Activated naive CD4-positive, alpha-beta T cell treated with anti-CD3 and anti-CD28 coated beads for 36 hours (primary cell): ENCODE measurements at regions of chr6 and their contacts with region 1.

Region 1: GRCh38 chr6:99151634-99152344 is 197.7 kb downstream of the FAXC start:
- DNase-seq: peak; percentile 67
- H3K4me3 Mint-ChIP-seq: no peak overlapping the region
- H3K27ac Mint-ChIP-seq: no peak overlapping the region
- H3K4me1 Mint-ChIP-seq: no peaks in the 10 kb centered on the region
- H3K27me3 Mint-ChIP-seq: peaks cover 3% of the 10 kb centered on the region

Region 2: DNA sequence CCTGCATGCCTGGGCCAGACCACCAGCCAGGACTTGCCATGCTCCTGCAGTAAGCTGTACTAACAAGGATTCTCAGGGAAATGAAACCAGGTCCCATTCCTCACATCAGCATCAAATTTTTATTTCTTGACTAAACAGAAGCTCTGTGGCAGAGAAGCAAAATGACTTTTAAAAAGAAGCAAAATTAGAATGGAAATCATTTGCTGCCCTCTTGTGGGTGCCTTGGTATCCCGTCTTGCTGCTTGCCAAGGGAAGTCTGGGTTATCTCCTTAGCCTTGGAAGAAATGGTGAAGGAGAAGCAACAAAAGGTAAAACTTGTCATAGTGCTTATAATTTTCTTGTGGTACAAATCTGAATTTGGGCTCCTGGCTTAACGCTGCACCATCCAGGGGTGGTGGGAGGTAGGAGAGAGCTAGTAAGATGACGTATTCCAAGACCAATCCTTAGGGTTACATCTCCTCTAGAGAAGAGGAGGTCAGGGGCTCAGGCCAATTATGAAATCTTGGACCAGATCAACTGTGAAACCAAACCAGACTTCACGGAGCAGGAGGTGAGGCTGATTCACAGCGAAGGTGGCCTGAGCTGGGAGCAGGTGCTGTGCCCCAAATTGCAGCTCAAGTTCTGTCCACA is 90.2 kb after region 1 on chr6:
- CTCF ChIA-PET with region 1: interaction called, 5 read pairs
- intact Hi-C with region 1: loop called (anchors 5 kb)
- DNase-seq: peak; percentile 16
- H3K4me3 Mint-ChIP-seq: no peak overlapping the region
- H3K27ac Mint-ChIP-seq: no peak overlapping the region
- H3K4me1 Mint-ChIP-seq: no peaks in the 10 kb centered on the region
- H3K27me3 Mint-ChIP-seq: peaks cover 20% of the 10 kb centered on the region

Region 3: DNA sequence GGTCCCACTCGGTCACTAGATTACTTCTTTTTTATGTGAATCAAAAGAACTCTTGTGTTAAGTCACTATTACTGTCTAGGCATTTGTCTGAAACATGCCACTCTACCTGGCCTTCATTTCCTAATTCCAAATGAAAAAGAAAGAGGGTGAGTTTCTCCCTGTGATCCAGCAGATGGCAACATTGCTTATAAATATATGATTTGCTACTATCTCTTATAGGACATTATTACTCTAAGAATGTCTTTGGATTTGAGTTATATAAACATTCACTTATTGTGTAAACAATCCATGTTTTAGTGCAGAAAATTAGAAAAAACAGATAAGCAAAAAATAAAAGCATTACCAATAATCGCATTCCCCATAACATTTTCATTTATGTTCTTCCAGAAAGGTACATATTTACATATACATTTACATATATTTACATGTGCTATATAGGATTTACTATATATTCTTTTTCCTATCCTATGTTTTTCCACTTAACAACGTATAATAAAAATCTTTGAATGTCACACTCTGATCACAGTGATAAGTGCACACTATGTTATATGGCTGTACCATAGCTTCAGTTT is 130.8 kb after region 1 on chr6:
- CTCF ChIA-PET with region 1: no interaction called
- intact Hi-C with region 1: loop called (anchors 10 kb)
- DNase-seq: no peak
- H3K4me3 Mint-ChIP-seq: no peak overlapping the region
- H3K27ac Mint-ChIP-seq: no peak overlapping the region
- H3K4me1 Mint-ChIP-seq: no peaks in the 10 kb centered on the region
- H3K27me3 Mint-ChIP-seq: peaks cover 6% of the 10 kb centered on the region